A673 (cell line): ENCODE measurements at regions of chr1 and their contacts with region 1.

Region 1: GRCh38 chr1:222739465-222739864 is 2.5 kb downstream of the FAM177B start:
- DNase-seq: no peak
- H3K4me3 ChIP-seq: no peak overlapping the region
- H3K27ac ChIP-seq: no peak overlapping the region
- H3K4me1 ChIP-seq: no peaks in the 10 kb centered on the region
- H3K27me3 ChIP-seq: no peaks in the 10 kb centered on the region
- CTCF ChIP-seq: no peak

Region 2: GRCh38 chr1:221878134-221878533 is 861.3 kb before region 1 on chr1:
- CTCF ChIA-PET with region 1: no interaction called
- POLR2A ChIA-PET with region 1: no interaction called
- intact Hi-C with region 1: no loop called
- DNase-seq: no peak
- H3K4me3 ChIP-seq: no peak overlapping the region
- H3K27ac ChIP-seq: no peak overlapping the region
- H3K4me1 ChIP-seq: no peaks in the 10 kb centered on the region
- H3K27me3 ChIP-seq: no peaks in the 10 kb centered on the region
- CTCF ChIP-seq: no peak

Region 3: DNA sequence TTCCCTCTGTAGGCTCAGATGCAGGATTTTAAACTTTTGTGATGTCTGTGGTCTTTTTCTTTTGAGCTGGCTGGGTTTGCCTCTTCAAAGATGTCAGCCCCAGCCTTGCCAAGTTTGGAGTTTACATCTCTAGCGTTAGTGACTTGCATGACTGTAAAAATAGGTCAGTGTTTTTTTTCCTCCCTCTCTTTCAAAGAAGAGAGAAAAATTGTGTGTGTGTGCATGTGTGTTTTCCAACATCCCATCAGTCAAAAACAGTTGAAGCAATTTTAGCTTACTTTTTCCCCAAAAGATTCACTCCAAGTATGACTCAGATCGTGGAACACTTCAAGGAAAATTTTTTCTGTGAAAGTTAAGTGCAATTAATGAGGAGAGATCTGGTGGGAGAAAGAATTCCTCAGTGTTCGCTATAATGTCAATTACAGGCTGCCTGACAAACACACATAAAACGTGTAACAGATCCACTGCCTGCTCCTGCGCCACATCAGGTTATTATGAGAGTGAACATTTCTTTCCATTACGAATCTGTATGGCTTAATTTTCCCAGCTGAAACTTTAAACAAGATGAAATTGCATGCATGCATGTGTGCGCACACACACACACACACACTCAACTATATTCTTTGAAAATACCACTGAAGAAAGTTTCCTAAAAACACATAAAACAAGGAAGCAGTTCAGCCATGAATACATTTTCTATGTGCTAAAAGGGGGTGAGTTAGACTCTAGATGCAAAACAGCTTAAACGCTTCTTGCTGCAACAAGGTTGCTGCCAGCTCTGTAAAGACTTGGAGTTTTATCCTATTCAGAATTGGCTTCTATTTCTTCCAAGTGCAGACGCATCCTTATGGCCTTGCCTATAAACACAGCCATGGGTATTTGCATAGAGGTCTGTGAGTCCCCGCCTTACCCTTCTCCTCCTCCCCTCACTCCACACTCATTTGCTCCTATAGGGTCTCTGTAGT is 348.1 kb after region 1 on chr1:
- CTCF ChIA-PET with region 1: interaction called, 14 read pairs
- POLR2A ChIA-PET with region 1: no interaction called
- intact Hi-C with region 1: no loop called
- DNase-seq: no peak
- H3K4me3 ChIP-seq: no peak overlapping the region
- H3K27ac ChIP-seq: no peak overlapping the region
- H3K4me1 ChIP-seq: no peaks in the 10 kb centered on the region
- H3K27me3 ChIP-seq: no peaks in the 10 kb centered on the region
- CTCF ChIP-seq: no peak